Activated naive CD4-positive, alpha-beta T cell treated with anti-CD3 and anti-CD28 coated beads, Interleukin-2, amount 10 ng/mL, durations not matched to agents 7 days and 5 days (primary cell): ENCODE measurements at regions of chr4 and their contacts with region 1.

Region 1: GRCh38 chr4:25993395-25994185 is 79.6 kb downstream of the SMIM20 start:
- DNase-seq: peak; percentile 25
- H3K4me3 Mint-ChIP-seq: no peak overlapping the region
- H3K27ac Mint-ChIP-seq: no peak overlapping the region
- H3K4me1 Mint-ChIP-seq: peaks cover 2% of the 10 kb centered on the region
- H3K27me3 Mint-ChIP-seq: peaks cover 17% of the 10 kb centered on the region

Region 2: DNA sequence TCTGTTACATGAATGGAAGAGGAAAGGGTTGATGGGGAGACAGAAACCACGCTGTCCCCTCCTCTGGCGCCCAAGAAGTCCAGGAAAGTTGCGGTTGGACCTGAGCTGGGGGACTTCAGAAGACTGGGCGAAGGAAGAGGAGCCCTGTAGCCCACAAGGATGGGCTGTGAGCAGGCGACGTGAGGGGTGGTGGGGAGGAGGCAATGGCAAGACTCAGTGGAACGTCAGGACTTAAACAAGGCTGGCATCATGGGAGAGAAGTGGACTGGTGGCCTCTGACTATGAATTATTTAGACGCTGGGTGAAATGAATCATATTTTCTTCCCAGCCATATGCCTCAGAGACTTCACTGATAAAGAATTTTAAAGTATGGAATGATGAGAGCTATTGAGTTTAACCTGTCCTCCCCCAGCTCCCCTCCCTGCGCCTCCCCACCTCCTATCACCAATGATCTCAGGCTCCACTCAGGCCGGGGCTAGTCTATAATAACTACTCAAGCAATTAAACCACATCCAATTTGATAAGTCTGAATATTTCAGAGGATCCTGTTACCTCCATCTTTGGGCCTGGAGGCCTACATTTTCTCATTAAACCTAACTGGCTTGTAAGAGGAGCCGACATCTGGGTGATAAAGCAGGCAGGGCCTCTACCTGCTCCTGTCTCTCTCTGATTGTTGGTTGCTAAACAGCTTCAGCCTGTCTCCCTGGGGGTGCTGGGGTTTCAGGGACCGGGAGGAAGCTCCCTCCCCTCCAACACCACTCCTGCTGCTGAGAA is 16.0 kb before region 1 on chr4:
- CTCF ChIA-PET with region 1: interaction called, 11 read pairs
- DNase-seq: no peak
- H3K4me3 Mint-ChIP-seq: no peak overlapping the region
- H3K27ac Mint-ChIP-seq: no peak overlapping the region
- H3K4me1 Mint-ChIP-seq: no peaks in the 10 kb centered on the region
- H3K27me3 Mint-ChIP-seq: peaks cover 12% of the 10 kb centered on the region